Sigmoid colon (tissue), 7 donors: ENCODE measurements at regions of chr18 and their contacts with region 1.

Region 1: DNA sequence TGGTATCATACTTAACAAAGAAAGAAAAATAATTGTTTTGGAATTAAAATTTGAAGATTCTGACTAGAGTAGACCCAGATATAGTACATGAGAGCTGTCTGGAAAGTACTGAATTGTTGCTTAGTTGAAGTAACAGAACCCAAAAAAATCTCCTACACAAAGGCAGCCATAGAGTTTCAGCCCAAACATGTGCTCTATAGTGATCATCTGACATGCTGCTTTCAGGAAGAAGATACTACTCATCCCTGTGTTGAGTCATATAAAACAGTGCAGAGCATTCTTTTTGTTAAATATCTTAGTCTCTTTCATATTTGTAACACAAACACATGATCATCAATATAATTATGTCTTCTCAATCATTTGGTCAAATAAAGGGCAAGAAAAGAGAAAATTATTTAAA is 84.8 kb upstream of the PTPRM start:
- DNase-seq: no peak
- H3K4me3 ChIP-seq: no peak overlapping the region
- H3K27ac ChIP-seq: peak overlapping the region in 3 of 4 donors; percentile 65 to 81 (median 75)
- H3K4me1 ChIP-seq: peaks cover 0 to 66% (median 29%) of the 10 kb centered on the region in 4 donors
- H3K27me3 ChIP-seq: no peaks in the 10 kb centered on the region
- CTCF ChIP-seq: no peak
- EP300 ChIP-seq: no peak
- POLR2A ChIP-seq: no peak

Region 2: DNA sequence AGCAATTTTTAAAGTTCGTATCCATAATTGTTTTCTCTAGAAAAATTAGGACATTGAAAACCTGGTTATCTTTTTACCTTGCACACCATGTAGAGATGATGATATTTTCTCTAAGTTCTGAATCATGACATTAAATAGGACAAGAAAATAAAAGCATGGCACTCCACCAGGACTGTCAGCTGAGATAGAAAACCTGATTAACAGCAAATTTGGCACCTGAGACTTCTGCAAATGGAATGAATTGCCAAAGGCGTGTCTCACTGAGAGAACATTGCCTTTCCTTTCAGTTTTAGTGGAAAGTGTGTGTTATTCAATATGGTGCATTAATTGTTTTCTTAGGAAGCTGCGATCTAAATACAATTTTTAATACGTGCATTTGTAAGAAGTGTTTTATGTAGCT is 86.8 kb before region 1 on chr18:
- intact Hi-C with region 1: no loop called
- DNase-seq: no peak
- H3K4me3 ChIP-seq: no peak overlapping the region
- H3K27ac ChIP-seq: no peak overlapping the region
- H3K4me1 ChIP-seq: no peaks in the 10 kb centered on the region
- H3K27me3 ChIP-seq: no peaks in the 10 kb centered on the region
- CTCF ChIP-seq: no peak
- EP300 ChIP-seq: no peak
- POLR2A ChIP-seq: no peak

Region 3: GRCh38 chr18:7459851-7460770 is 22.2 kb before region 1 on chr18:
- intact Hi-C with region 1: loop called (anchors 2 kb)
- DNase-seq: peak; percentile 77
- H3K4me3 ChIP-seq: peak overlapping the region in 3 of 4 donors; percentile 14 to 37 (median 25)
- H3K27ac ChIP-seq: peak overlapping the region; percentile 84 to 89 (median 85)
- H3K4me1 ChIP-seq: peaks cover 0 to 60% (median 56%) of the 10 kb centered on the region in 4 donors
- H3K27me3 ChIP-seq: no peaks in the 10 kb centered on the region
- CTCF ChIP-seq: no peak
- EP300 ChIP-seq: no peak
- POLR2A ChIP-seq: no peak

Region 4: DNA sequence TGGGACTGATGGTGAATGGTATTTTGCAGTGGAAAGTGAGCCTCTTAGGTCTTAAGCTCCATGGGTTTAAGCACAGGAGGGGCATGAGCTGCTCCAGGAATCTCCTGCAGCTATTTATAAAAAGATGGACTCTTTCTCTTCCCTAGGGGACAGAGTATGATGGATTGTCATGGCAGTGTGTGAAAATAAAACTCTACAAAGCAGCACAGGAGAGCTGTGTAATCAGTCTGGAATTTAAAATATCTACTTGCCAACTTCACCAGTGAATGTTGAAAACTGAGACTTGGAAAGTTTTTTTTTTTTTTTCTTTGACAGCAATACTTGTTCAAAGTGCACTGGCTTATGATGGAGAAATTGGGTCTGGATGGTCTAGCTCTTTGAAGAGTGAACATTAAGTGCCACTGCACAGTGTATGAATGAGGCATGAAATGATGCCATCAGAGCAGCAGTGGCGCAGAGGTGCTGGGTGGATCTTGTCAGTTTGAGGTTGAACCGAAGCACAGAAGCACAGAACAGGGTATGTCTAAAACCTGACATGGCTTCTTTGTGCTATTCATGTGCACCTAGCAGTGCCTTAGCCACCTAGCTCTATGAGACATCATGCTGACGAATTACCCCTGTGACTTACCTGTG is 330.2 kb after region 1 on chr18:
- intact Hi-C with region 1: no loop called
- DNase-seq: no peak
- H3K4me3 ChIP-seq: no peak overlapping the region
- H3K27ac ChIP-seq: peak overlapping the region in 1 of 4 donors; percentile 40
- H3K4me1 ChIP-seq: peaks cover 0 to 31% (median 19%) of the 10 kb centered on the region in 4 donors
- H3K27me3 ChIP-seq: no peaks in the 10 kb centered on the region
- CTCF ChIP-seq: no peak
- EP300 ChIP-seq: no peak
- POLR2A ChIP-seq: no peak